ENCODE measurements at regions of chr7 and their contacts with region 1.

Region 1: DNA sequence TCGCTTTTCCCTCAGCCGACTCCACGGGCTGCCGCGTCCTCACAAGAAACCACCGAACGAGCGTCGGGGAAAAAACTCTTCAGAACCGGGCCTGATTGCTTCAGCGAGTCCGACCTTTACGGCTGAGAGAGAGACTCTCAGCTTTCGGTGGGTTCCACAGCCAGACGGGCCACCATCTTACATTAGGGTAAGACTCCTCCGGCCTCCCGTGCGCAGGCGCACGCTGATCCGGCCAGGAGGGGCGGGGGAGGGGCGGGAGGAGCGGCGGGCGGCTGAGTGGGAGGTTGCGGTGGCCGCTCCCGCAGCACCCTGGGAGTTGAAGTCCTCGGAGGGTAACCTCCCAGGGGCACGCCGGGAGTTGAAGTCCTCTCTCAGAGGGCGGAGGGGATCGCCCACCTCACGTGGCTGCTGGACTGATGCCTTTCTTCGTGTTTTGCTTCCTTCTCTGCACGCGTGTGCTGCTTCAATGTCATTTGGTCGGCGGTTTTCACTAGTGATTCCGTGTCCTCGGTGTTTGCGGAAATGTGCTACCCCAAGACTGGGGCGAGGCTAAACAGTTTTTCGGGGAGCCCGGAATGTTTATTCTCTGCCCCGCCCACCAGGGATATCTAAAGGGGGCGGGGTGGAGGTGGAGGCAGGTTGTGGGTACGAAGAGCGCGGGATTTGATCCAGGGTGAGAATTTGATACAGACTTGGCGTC is at the start of gene CNOT4:
- DNase-seq: peak; percentile 83
- ATAC-seq: peak; percentile 98
- H3K4me3 ChIP-seq: peak within 1 kb of the TSS; percentile 95 to 99
- H3K27ac ChIP-seq: peak within 1 kb of the TSS; percentile 91
- H3K4me1 ChIP-seq: peaks cover 14% of the 10 kb centered on the region
- H3K27me3 ChIP-seq: no peaks in the 10 kb centered on the region
- CTCF ChIP-seq: no peak
- total RNA-seq, gene CNOT4: 22.3 TPM

Region 2: GRCh38 chr7:135558337-135558767 is 48.3 kb after region 1 on chr7:
- CTCF ChIA-PET with region 1: no interaction called
- POLR2A ChIA-PET with region 1: no interaction called
- in situ Hi-C with region 1: no loop called
- intact Hi-C with region 1: loop called (anchors 1 kb)
- DNase-seq: peak; percentile 63
- ATAC-seq: peak; percentile 72
- H3K4me3 ChIP-seq: peak overlapping the region; percentile 97 to 99
- H3K27ac ChIP-seq: peak overlapping the region; percentile 97
- H3K4me1 ChIP-seq: no peaks in the 10 kb centered on the region
- H3K27me3 ChIP-seq: no peaks in the 10 kb centered on the region
- CTCF ChIP-seq: peak; percentile 80

Region 3: DNA sequence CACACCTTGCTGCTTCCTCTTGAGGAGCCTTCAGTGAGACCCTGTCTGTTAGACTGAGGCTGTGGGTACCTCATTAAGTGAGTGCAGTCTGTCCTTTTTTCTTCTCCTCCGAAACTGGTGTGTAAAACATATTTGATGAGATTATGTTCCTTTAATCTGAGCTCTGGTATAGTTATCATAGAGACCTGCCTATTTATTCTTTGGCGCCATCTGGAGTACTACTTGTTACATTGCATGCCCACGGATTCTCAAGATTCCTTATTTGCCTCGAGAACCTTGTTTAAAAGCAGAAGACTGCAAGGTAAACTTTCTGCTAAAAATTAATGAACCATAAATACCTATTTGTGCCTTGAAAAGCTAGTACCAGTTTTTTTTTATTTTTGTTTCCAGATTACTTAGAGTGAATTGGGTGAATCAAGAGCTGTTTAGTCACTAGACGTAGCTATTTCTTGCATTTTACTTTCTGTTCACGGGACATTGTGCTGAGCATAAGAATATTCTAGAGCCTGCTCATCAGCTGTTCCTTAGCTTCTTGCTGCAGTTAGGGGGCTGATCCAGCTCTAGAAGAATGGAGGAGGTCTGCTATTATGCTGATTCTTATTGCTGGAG is 135.3 kb after region 1 on chr7:
- CTCF ChIA-PET with region 1: interaction called, 3 read pairs
- POLR2A ChIA-PET with region 1: no interaction called
- in situ Hi-C with region 1: no loop called
- intact Hi-C with region 1: loop called (anchors 10 kb)
- DNase-seq: no peak
- ATAC-seq: peak; percentile 86
- H3K4me3 ChIP-seq: no peak overlapping the region
- H3K27ac ChIP-seq: no peak overlapping the region
- H3K4me1 ChIP-seq: no peaks in the 10 kb centered on the region
- H3K27me3 ChIP-seq: no peaks in the 10 kb centered on the region
- CTCF ChIP-seq: peak; percentile 79

Region 4: GRCh38 chr7:136890399-136890798 is 1380.3 kb after region 1 on chr7:
- CTCF ChIA-PET with region 1: no interaction called
- POLR2A ChIA-PET with region 1: no interaction called
- in situ Hi-C with region 1: no loop called
- intact Hi-C with region 1: no loop called
- DNase-seq: no peak
- ATAC-seq: no peak
- H3K4me3 ChIP-seq: no peak overlapping the region
- H3K27ac ChIP-seq: no peak overlapping the region
- H3K4me1 ChIP-seq: no peaks in the 10 kb centered on the region
- H3K27me3 ChIP-seq: no peaks in the 10 kb centered on the region
- CTCF ChIP-seq: no peak